Prostate gland (tissue), 2 donors: ENCODE measurements at regions of chr2 and their contacts with region 1.

Region 1: DNA sequence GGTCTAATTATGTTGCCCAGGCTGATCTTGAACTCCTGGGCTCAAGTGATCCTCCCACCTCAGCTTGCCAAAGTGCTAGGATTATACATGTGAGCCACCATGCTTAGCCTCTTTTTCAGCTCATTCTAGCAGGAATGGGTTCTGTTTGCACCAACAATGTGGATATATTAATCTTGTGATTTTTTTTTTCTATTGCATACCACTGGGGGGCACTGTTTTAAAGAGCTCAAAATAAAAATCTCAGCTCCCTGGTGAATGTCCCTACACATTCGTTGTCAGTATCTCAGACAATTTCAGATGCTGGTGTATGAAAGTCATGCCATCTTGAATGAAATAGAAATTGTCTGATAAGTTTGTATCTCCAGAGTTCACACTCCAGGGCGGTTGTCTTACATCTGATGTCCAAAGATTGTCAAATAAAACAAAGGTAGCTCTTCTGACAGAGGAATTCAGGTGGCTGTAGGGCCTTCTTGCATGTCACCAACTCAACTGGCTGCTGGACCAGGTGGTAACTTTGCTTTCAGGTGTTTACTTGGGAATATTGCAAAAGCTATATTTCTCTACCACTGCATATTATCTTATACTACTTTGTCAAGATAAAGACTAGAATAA is 3.1 kb upstream of the MATN3 start:
- DNase-seq: no peak
- H3K4me3 ChIP-seq: no peak overlapping the region
- H3K27ac ChIP-seq: no peak overlapping the region
- H3K4me1 ChIP-seq: no peaks in the 10 kb centered on the region
- H3K27me3 ChIP-seq: no peaks in the 10 kb centered on the region
- CTCF ChIP-seq: peak; percentile 56 to 66 (median 61)
- POLR2A ChIP-seq: no peak

Region 2: GRCh38 chr2:20051532-20052228 is 36.1 kb after region 1 on chr2 and contains the start of gene LAPTM4A:
- intact Hi-C with region 1: loop called (anchors 5 kb)
- DNase-seq: peak; percentile 99
- H3K4me3 ChIP-seq: peak within 1 kb of the TSS; percentile 87 to 89
- H3K27ac ChIP-seq: peak within 1 kb of the TSS; percentile 94 to 98
- H3K4me1 ChIP-seq: no peaks in the 10 kb centered on the region
- H3K27me3 ChIP-seq: no peaks in the 10 kb centered on the region
- CTCF ChIP-seq: peak in 2 of 4 experiments; percentile 38 to 59
- POLR2A ChIP-seq: peak; percentile 95
- total RNA-seq, gene LAPTM4A: 142 to 340 TPM

Region 3: DNA sequence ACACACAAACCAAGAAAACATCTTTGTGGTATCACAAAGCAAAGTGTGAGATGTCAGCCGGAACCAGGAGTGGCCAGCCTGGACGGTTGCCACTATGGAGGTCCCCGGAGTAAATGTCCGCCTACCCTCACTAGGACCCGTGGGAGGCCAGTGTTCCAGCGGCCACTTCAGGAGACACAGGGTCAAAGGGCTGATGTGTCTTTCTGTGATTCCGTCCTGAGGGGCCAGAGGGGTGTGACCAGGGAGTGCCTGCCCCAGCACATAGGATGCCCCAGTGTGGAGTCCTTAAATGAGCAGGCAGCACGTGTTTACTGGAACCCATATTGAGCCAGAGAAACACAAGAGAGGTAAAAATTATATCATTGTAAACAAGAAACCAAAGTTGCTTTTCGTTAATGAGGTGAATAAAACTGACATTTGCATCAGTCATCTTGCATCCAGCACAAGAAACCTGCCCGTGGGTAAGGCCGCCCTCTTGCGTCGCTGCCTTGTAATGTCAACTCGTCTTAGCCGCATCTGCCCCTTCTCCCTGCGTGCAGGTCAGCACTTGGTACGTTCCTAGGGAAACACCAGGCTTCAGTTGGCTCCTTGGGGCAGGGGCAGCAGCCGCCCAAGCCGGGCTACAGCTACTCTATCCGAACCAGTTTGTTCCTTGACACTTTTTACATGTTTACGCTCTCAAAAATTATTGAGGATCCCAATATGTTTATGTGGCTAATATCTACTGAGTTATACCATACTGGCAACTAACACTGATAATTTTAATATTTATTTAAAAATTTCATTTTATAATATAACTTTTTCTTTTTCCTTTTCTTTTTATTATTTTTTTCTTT is 82.5 kb after region 1 on chr2:
- intact Hi-C with region 1: loop called (anchors 1 kb)
- DNase-seq: peak; percentile 69
- H3K4me3 ChIP-seq: no peak overlapping the region
- H3K27ac ChIP-seq: no peak overlapping the region
- H3K4me1 ChIP-seq: no peaks in the 10 kb centered on the region
- H3K27me3 ChIP-seq: no peaks in the 10 kb centered on the region
- CTCF ChIP-seq: peak; percentile 32 to 88 (median 72)
- POLR2A ChIP-seq: no peak